HepG2 (cell line): ENCODE measurements at regions of chr3 and their contacts with region 1.

Region 1: GRCh38 chr3:11591391-11592282 is 52.1 kb downstream of the VGLL4 start:
- DNase-seq: peak; percentile 82
- ATAC-seq: peak; percentile 82
- H3K4me3 ChIP-seq: no peak overlapping the region
- H3K27ac ChIP-seq: peak overlapping the region; percentile 41
- H3K4me1 ChIP-seq: peaks cover 78% of the 10 kb centered on the region
- H3K27me3 ChIP-seq: no peaks in the 10 kb centered on the region
- CTCF ChIP-seq: no peak
- EP300 ChIP-seq: peak in 1 of 2 experiments; percentile 36; a peak in 1 of 4 replicates
- POLR2A ChIP-seq: no peak
- RAD21 ChIP-seq: no peak

Region 2: GRCh38 chr3:11601446-11602238 is 10.0 kb after region 1 on chr3:
- CTCF ChIA-PET with region 1: no interaction called
- POLR2A ChIA-PET with region 1: interaction called, 10 read pairs
- in situ Hi-C with region 1: no loop called
- intact Hi-C with region 1: no loop called
- DNase-seq: no peak
- ATAC-seq: no peak
- H3K4me3 ChIP-seq: no peak overlapping the region
- H3K27ac ChIP-seq: no peak overlapping the region
- H3K4me1 ChIP-seq: peaks cover 19% of the 10 kb centered on the region
- H3K27me3 ChIP-seq: no peaks in the 10 kb centered on the region
- CTCF ChIP-seq: no peak
- EP300 ChIP-seq: no peak
- POLR2A ChIP-seq: no peak
- RAD21 ChIP-seq: no peak

Region 3: GRCh38 chr3:11619946-11620657 is 28.5 kb after region 1 on chr3:
- CTCF ChIA-PET with region 1: no interaction called
- POLR2A ChIA-PET with region 1: interaction called, 4 read pairs
- in situ Hi-C with region 1: no loop called
- intact Hi-C with region 1: loop called (anchors 2 kb)
- DNase-seq: no peak
- ATAC-seq: peak; percentile 39
- H3K4me3 ChIP-seq: peak overlapping the region in 2 of 3 experiments; percentile 23 to 61; a peak in 2 of 6 replicates
- H3K27ac ChIP-seq: peak overlapping the region; percentile 86
- H3K4me1 ChIP-seq: peaks cover 100% of the 10 kb centered on the region
- H3K27me3 ChIP-seq: no peaks in the 10 kb centered on the region
- CTCF ChIP-seq: no peak
- EP300 ChIP-seq: no peak
- POLR2A ChIP-seq: no peak
- RAD21 ChIP-seq: no peak